ENCODE measurements at regions of chr1 and their contacts with region 1.

Region 1: GRCh38 chr1:28172713-28173150 is 3.8 kb downstream of the PTAFR start:
- DNase-seq: peak; percentile 98
- ATAC-seq: peak; percentile 59
- H3K4me3 ChIP-seq: 0 out of 2 replicates have a peak overlapping the region, but pooled peaks have one; percentile 30
- H3K27ac ChIP-seq: peak overlapping the region; percentile 69
- H3K4me1 ChIP-seq: peaks cover 82% of the 10 kb centered on the region
- H3K27me3 ChIP-seq: no peaks in the 10 kb centered on the region
- CTCF ChIP-seq: no peak
- EP300 ChIP-seq: peak; percentile 92 to 98
- POLR2A ChIP-seq: 0 out of 2 replicates have a peak, but pooled peaks have one; percentile 21
- RAD21 ChIP-seq: 0 out of 2 replicates have a peak, but pooled peaks have one; percentile 3

Region 2: DNA sequence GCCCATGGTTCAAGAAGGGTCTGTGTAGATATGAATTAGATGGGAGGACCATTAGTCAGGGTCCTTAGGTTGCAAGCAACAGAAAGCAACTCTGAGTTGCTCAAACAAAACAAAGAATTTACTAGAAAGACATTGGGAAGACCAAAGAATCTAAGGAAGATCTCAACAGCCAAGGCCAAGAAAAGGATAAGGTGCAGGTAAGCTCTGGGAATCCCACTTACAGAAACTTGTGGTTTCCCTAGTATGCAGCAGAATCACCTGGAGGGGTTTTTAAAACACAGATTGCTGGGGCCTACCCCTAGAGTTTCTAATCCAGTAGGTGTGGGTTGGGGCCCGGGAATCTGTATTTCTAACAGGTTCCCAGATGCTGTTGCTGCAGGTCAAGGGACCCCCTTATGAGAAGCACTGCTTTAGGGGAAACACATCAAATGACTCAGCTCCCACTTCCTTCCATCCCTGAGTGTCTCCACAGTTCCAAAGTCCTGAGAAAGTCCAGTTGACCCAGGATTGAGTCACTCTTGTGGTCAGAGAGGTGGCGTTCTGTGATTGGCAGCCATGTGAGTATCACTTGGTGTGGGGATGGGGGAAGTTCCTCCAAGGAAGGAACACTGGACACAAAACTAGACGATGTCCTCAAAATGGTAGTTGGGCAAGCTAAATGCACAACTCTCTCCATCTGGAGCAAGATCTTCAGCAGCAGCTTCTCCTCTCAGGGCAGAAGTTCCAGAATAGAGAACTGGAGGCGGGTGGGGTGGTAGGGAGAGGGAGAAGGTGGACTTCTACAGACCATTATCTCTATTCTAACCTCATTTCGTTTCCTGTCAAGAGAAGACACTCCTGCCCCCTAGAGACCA is 60.1 kb before region 1 on chr1:
- CTCF ChIA-PET with region 1: interaction called, 8 read pairs
- POLR2A ChIA-PET with region 1: interaction called, 11 read pairs
- RAD21 ChIA-PET with region 1: interaction called, 7 read pairs
- SMC1A ChIA-PET with region 1: interaction called, 8 read pairs
- in situ Hi-C with region 1: no loop called
- intact Hi-C with region 1: loop called (anchors 2 kb)
- DNase-seq: no peak
- ATAC-seq: peak; percentile 43; the same call in 1 of the 3 replicates
- H3K4me3 ChIP-seq: no peak overlapping the region
- H3K27ac ChIP-seq: no peak overlapping the region
- H3K4me1 ChIP-seq: peaks cover 39% of the 10 kb centered on the region
- H3K27me3 ChIP-seq: no peaks in the 10 kb centered on the region
- CTCF ChIP-seq: peak in 1 of 3 experiments; percentile 48; a peak in 1 of 6 replicates
- EP300 ChIP-seq: no peak
- POLR2A ChIP-seq: no peak
- RAD21 ChIP-seq: peak; percentile 60

Region 3: GRCh38 chr1:28139025-28139712 is 33.6 kb before region 1 on chr1:
- CTCF ChIA-PET with region 1: interaction called, 4 read pairs
- POLR2A ChIA-PET with region 1: interaction called, 15 read pairs
- RAD21 ChIA-PET with region 1: interaction called, 119 read pairs
- SMC1A ChIA-PET with region 1: interaction called, 42 read pairs
- in situ Hi-C with region 1: no loop called
- intact Hi-C with region 1: loop called (anchors 1 kb)
- DNase-seq: no peak
- ATAC-seq: peak; percentile 47
- H3K4me3 ChIP-seq: no peak overlapping the region
- H3K27ac ChIP-seq: no peak overlapping the region
- H3K4me1 ChIP-seq: peaks cover 44% of the 10 kb centered on the region
- H3K27me3 ChIP-seq: no peaks in the 10 kb centered on the region
- CTCF ChIP-seq: no peak
- EP300 ChIP-seq: no peak
- POLR2A ChIP-seq: no peak
- RAD21 ChIP-seq: no peak

Region 4: DNA sequence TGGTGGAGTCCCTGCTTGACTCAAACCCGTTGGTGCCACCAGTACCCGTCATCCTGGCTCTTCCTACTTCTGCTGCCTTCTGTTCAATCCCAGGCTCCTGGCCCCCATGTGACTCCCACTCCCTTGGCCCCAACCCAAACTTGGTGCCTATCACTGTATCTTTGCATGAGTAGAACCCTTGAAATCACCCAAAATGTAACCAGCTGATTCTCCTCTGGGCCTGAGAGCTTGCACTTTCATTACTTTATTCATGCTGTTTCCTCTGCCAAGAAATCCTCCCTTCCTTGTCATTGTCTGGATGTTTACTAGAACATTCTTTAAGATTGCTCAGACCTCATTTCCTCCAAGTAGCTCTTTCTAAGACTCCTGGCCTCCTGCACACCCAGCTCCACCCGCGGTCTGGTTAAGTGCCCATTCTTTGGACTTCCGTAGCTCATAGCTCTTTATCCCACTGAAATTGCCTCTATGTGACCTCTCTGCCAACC is 11.9 kb before region 1 on chr1:
- CTCF ChIA-PET with region 1: no interaction called
- POLR2A ChIA-PET with region 1: interaction called, 6 read pairs
- RAD21 ChIA-PET with region 1: interaction called, 13 read pairs
- SMC1A ChIA-PET with region 1: interaction called, 12 read pairs
- in situ Hi-C with region 1: no loop called
- intact Hi-C with region 1: no loop called
- DNase-seq: no peak
- ATAC-seq: no peak; the same call in 2 of the 3 replicates
- H3K4me3 ChIP-seq: no peak overlapping the region
- H3K27ac ChIP-seq: no peak overlapping the region
- H3K4me1 ChIP-seq: no peaks in the 10 kb centered on the region; the same call in 1 of the 2 replicates
- H3K27me3 ChIP-seq: no peaks in the 10 kb centered on the region
- CTCF ChIP-seq: no peak
- EP300 ChIP-seq: no peak
- POLR2A ChIP-seq: no peak
- RAD21 ChIP-seq: no peak